Heart left ventricle (tissue), 16 donors: ENCODE measurements at regions of chr17 and their contacts with region 1.

Region 1: DNA sequence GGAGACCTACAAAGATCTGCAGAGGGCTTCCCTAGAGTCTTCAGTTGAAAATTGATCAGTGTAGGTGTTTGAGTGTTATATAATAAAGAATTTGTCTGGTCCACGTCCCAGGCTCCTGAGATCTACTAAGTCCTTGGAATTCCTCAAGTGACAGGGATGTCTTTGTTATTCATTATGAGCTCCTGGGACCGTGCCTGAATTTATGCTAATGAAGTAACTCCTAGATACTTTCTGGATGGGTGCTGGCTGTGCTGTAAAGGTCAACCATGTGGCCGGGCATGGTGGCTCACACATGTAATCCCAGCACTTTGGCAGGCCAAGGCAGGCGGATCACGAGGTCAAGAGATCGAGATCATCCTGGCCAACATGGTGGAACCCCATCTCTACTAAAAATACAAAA is 43.7 kb downstream of the CDC27 start:
- DNase-seq: no peak
- ATAC-seq: no peak
- H3K4me3 ChIP-seq: no peak overlapping the region
- H3K27ac ChIP-seq: no peak overlapping the region
- H3K4me1 ChIP-seq: no peaks in the 10 kb centered on the region
- H3K27me3 ChIP-seq: no peaks in the 10 kb centered on the region
- CTCF ChIP-seq: no peak
- POLR2A ChIP-seq: no peak

Region 2: GRCh38 chr17:47131761-47132160 is 13.6 kb before region 1 on chr17:
- intact Hi-C with region 1: loop called in 1 of 10 experiments (anchors 2 kb)
- DNase-seq: no peak
- ATAC-seq: no peak
- H3K4me3 ChIP-seq: no peak overlapping the region
- H3K27ac ChIP-seq: no peak overlapping the region
- H3K4me1 ChIP-seq: no peaks in the 10 kb centered on the region
- H3K27me3 ChIP-seq: no peaks in the 10 kb centered on the region
- CTCF ChIP-seq: no peak
- POLR2A ChIP-seq: no peak

Region 3: GRCh38 chr17:47465165-47465564 is 319.8 kb after region 1 on chr17:
- intact Hi-C with region 1: no loop called
- DNase-seq: no peak
- ATAC-seq: no peak
- H3K4me3 ChIP-seq: no peak overlapping the region
- H3K27ac ChIP-seq: no peak overlapping the region
- H3K4me1 ChIP-seq: peaks cover 0 to 5% (median 0%) of the 10 kb centered on the region in 12 donors
- H3K27me3 ChIP-seq: no peaks in the 10 kb centered on the region
- CTCF ChIP-seq: no peak
- POLR2A ChIP-seq: no peak